ENCODE measurements at regions of chr1 and their contacts with region 1.

Region 1: GRCh38 chr1:86470859-86471258 is 2.1 kb downstream of the CLCA1 start:
- DNase-seq: no peak
- ATAC-seq: no peak
- H3K4me3 Mint-ChIP-seq: no peak overlapping the region
- H3K27ac Mint-ChIP-seq: no peak overlapping the region
- H3K4me1 Mint-ChIP-seq: no peaks in the 10 kb centered on the region
- H3K27me3 Mint-ChIP-seq: peaks cover 3% of the 10 kb centered on the region

Region 2: DNA sequence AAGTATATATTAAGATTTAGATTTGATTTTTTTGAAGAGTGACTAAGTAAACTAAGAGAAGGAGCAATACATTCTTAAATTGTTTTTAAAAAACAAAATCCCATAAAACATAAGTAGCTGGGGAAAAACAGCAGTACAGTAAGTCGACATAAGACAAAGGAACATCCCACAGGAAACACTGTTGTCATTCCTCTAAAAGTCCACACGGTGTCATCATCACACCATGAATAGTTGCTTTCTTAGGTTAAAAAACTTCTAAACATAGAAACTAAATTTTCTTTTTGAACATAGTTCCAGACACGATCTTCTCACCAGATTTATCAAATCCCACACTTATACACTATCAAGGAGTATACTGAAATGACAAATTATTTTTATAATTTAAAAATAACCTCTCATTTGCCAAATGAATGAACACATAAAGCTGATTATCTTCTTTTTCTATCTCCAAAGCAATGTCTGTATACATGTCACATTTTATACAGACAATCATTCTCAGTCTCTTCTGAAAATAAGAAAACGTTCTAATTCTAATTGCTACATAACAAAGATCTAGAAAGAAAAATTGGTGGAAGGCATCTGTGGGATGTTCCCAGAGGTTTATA is 90.5 kb before region 1 on chr1:
- CTCF ChIA-PET with region 1: interaction called, 19 read pairs
- POLR2A ChIA-PET with region 1: no interaction called
- intact Hi-C with region 1: loop called in 1 of 2 experiments (anchors 1 kb)
- DNase-seq: no peak
- ATAC-seq: peak; percentile 51
- H3K4me3 Mint-ChIP-seq: no peak overlapping the region
- H3K27ac Mint-ChIP-seq: no peak overlapping the region
- H3K4me1 Mint-ChIP-seq: peaks cover 8% of the 10 kb centered on the region
- H3K27me3 Mint-ChIP-seq: no peaks in the 10 kb centered on the region

Region 3: DNA sequence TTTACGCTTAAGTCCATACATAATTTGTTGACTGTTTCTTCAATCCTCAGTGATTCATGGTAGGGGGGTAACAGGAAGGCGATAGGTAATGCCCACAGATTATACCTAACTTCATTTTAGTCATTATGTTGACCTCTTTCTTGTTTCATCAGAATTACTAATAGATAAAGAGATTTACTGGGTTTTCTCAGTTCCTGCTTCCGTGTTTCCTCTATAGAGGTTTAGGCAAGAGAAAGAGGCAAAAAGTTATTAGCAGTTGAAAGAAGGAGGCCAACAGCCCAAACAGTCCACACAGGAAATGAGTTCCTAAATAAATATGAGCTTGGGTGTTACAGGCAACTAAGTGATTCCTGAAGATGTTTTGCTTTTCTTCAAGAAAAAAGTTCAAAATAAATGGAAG is 20.0 kb before region 1 on chr1:
- CTCF ChIA-PET with region 1: interaction called, 15 read pairs
- POLR2A ChIA-PET with region 1: no interaction called
- intact Hi-C with region 1: no loop called
- DNase-seq: no peak
- ATAC-seq: no peak
- H3K4me3 Mint-ChIP-seq: no peak overlapping the region
- H3K27ac Mint-ChIP-seq: no peak overlapping the region
- H3K4me1 Mint-ChIP-seq: no peaks in the 10 kb centered on the region
- H3K27me3 Mint-ChIP-seq: no peaks in the 10 kb centered on the region

Region 4: GRCh38 chr1:86687595-86687994 is 216.7 kb after region 1 on chr1:
- CTCF ChIA-PET with region 1: interaction called, 4 read pairs
- POLR2A ChIA-PET with region 1: no interaction called
- intact Hi-C with region 1: loop called in 1 of 2 experiments (anchors 10 kb)
- DNase-seq: no peak
- ATAC-seq: no peak
- H3K4me3 Mint-ChIP-seq: no peak overlapping the region
- H3K27ac Mint-ChIP-seq: no peak overlapping the region
- H3K4me1 Mint-ChIP-seq: no peaks in the 10 kb centered on the region
- H3K27me3 Mint-ChIP-seq: no peaks in the 10 kb centered on the region

Region 5: DNA sequence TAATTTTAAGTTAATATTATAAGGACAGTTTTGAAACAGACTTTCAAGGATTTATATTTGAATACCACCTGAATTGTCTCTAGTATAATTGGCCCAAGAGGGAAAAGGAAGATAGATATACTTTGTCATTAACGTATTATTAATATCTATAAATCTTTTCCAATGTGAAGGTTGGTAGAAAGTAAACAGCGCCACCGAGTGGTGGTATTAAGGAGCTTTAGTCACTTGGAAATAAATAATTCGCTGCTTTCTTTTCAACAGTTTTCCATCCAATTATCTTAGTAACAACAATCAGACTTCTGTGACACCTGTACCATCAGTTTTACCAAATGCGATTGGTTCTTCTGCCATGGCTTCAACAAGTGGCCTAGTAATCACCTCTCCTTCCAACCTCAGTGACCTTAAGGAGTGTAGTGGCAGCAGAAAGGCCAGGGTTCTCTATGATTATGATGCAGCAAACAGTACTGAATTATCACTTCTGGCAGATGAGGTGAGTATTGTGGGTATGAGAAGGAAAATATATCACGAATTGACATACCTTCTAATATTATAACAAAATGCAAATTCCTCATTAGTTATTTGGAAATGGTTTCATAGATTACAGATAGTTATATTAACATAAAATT is 271.2 kb after region 1 on chr1:
- CTCF ChIA-PET with region 1: interaction called, 8 read pairs
- POLR2A ChIA-PET with region 1: no interaction called
- intact Hi-C with region 1: loop called in 1 of 2 experiments (anchors 5 kb)
- DNase-seq: peak; percentile 47
- ATAC-seq: no peak
- H3K4me3 Mint-ChIP-seq: no peak overlapping the region
- H3K27ac Mint-ChIP-seq: no peak overlapping the region
- H3K4me1 Mint-ChIP-seq: peaks cover 2% of the 10 kb centered on the region
- H3K27me3 Mint-ChIP-seq: no peaks in the 10 kb centered on the region

Measured in activated CD4-positive, alpha-beta T cell treated with anti-CD3 and anti-CD28 coated beads for 36 hours (primary cell).